ENCODE measurements at regions of chr7 and their contacts with region 1.

Region 1: DNA sequence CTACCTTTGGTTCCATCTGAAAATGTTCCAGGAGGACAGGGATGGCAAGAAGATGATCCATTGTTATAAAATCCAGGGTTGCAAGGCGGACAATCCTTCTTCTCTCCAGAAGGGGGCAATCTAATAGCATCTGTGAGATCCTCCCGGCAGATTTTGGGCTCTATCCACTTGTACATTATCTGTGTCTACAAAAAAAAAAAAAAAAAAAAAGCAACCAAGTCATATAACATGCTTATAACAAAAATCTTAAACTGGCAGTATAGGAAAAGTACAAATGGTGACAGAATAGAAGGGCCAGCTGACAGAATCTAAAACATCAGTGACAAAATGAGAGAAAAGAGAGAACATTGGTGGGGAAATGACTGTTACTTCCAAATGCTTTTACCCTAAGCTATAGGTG is 132.7 kb downstream of the ELAPOR2 start:
- DNase-seq: peak; percentile 43
- ATAC-seq: peak; percentile 19
- H3K4me3 Mint-ChIP-seq: no peak overlapping the region
- H3K27ac Mint-ChIP-seq: no peak overlapping the region
- H3K4me1 Mint-ChIP-seq: peaks cover 8% of the 10 kb centered on the region
- H3K27me3 Mint-ChIP-seq: peaks cover 7% of the 10 kb centered on the region

Region 2: DNA sequence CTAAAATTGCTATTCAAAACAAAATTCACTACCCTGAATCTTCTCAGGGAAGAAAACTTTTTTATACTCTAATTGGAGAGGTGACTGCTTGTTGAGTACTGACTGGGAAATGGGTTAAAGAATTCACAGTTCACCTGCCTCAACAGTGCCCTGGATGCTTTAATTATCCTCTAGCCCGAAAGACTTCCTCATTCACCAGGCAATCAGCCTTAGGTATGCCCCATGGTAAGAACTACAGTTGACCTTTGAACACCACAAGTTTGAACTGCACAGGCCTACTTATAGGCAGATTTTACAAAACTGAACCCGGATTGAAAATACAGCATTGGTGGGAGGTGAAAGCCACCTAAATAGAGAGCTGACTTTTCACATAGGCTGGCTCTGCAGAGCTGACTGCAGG is 42.6 kb before region 1 on chr7:
- CTCF ChIA-PET with region 1: no interaction called
- POLR2A ChIA-PET with region 1: no interaction called
- intact Hi-C with region 1: no loop called
- DNase-seq: no peak
- ATAC-seq: no peak
- H3K4me3 Mint-ChIP-seq: no peak overlapping the region
- H3K27ac Mint-ChIP-seq: no peak overlapping the region
- H3K4me1 Mint-ChIP-seq: no peaks in the 10 kb centered on the region
- H3K27me3 Mint-ChIP-seq: no peaks in the 10 kb centered on the region

Region 3: GRCh38 chr7:86898171-86898570 is 28.6 kb before region 1 on chr7:
- CTCF ChIA-PET with region 1: no interaction called
- POLR2A ChIA-PET with region 1: no interaction called
- intact Hi-C with region 1: no loop called
- DNase-seq: no peak
- ATAC-seq: no peak
- H3K4me3 Mint-ChIP-seq: no peak overlapping the region
- H3K27ac Mint-ChIP-seq: no peak overlapping the region
- H3K4me1 Mint-ChIP-seq: no peaks in the 10 kb centered on the region
- H3K27me3 Mint-ChIP-seq: no peaks in the 10 kb centered on the region

Region 4: DNA sequence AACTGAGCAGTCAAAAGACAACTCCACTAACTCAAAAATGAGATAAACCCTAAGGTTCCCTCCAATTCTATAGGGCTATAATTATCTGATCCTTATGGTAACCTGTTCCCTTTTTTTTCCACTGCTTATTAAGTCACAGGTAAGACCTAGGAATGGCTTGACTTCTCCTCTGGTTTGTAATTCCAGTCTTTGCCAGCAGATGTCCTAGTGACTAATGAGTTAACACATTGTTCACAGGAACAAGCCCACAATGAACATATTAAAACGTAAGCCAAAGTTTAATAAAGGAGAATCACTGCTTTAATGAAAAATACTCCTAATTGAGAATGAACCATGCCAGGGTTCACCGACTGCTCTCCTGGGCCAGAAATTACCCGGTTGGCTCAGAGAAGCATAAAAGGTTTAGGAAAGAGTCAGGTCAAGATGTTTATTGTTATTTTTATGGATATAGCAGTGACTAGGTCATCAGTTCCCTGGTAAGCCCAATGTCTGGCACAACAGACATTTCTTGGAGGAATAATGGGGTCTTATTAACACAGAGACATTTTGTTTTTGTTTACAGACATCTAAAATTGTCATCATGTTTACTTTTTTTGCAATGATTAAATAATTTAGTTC is 12.6 kb after region 1 on chr7:
- CTCF ChIA-PET with region 1: interaction called, 10 read pairs
- POLR2A ChIA-PET with region 1: no interaction called
- intact Hi-C with region 1: no loop called
- DNase-seq: peak; percentile 46
- ATAC-seq: peak; percentile 65
- H3K4me3 Mint-ChIP-seq: no peak overlapping the region
- H3K27ac Mint-ChIP-seq: no peak overlapping the region
- H3K4me1 Mint-ChIP-seq: no peaks in the 10 kb centered on the region
- H3K27me3 Mint-ChIP-seq: no peaks in the 10 kb centered on the region

Region 5: DNA sequence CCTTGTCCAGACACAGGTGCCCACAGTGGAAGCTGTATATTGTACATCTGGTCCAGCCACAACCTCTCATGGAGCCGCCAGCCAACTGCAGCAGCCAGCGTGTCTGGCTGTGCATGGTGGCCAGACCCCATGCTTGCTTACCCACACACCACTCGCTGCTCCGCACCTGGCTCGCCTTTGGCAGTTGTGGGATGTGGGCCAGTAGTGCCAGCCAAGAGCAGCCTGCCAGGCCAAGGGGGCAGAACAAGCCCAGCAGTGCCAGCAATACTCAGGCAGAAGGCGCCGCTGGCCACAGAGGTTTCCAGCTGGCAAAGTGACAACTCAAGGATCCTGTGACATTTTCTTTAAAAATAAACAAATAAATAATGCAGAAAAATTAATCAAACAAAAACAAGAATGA is 304.5 kb after region 1 on chr7:
- CTCF ChIA-PET with region 1: interaction called, 13 read pairs
- POLR2A ChIA-PET with region 1: no interaction called
- intact Hi-C with region 1: no loop called
- DNase-seq: no peak
- ATAC-seq: no peak
- H3K4me3 Mint-ChIP-seq: no peak overlapping the region
- H3K27ac Mint-ChIP-seq: no peak overlapping the region
- H3K4me1 Mint-ChIP-seq: peaks cover 9% of the 10 kb centered on the region
- H3K27me3 Mint-ChIP-seq: peaks cover 4% of the 10 kb centered on the region

Measured in activated CD4-positive, alpha-beta T cell treated with anti-CD3 and anti-CD28 coated beads for 36 hours (primary cell).